Right ventricle myocardium inferior (tissue), 1 donor: ENCODE measurements at regions of chr9 and their contacts with region 1.

Region 1: DNA sequence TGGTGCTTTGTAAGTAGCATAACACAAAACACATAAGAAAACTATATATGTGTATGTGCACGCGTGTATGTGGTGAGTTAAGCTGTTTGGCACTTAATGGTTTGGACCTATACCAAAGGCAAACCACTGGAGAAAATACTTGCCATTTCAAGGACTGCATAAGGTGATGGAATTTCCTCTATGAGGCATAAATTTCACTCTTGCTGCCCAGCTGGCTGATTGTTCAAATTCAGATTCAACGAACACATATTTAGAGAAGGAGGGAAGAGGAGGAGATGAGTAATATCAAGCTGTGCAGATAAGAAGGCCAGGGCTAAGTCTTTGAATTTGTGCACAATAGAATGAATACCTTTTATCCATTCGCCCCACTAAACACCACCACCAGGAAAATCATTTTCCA is 470.6 kb upstream of the MPDZ start:
- DNase-seq: no peak
- ATAC-seq: no peak

Region 2: DNA sequence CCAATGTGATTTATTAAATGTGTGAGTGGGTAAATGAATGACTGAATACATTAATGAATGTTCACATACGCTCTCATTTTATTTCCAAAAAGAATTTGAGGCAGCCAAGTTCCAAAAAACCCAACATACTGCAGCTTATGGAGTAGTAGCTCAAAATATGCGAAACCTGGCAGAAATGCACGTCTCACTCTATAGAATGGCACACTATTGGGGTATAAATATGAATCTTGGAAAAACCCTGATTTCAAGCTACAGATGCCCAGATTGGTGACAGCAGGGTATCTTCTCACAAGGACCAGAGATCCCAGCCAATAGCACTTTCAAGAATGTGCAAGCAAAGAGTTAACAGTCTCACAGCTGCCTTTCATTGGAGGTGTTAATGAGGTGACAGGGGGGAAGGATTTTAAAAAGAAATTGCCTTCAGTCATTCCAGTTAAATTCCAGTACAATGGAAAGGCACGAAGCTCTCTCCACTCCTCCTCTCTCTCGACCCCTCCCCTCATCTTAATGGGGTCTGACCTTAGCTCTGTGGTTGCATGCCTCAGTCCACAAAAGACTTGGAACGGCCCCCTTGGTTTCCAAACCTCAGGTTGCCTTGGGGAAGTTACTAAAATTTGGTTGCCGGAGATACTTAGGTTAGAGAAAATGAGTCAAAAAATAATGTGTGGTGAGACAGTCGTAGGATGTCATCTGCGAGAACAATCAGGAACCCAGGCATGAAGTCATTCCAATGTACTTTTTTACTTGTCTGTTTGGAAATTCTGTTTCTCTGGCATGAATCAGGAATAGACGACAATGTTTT is 256.5 kb after region 1 on chr9:
- intact Hi-C with region 1: loop called (anchors 10 kb)
- DNase-seq: no peak
- ATAC-seq: no peak

Region 3: DNA sequence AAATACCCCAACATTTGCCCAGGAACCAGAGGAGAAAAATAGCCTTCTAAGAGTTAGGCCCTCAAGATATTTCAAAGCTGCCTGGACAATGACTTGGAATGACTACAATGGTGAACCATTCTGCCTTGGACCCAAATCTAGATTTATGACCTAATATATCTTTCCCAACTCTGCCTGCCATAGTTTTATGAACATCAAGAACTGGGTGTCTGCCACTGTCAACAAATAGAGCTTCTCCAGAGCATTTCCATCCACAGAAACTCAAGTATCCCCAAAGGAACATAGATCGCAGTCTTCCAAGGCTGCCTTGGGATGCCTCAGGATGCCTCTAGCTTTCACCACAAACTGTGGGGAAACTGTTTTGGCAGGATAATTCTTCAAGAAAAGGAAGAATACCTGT is 612.1 kb after region 1 on chr9:
- intact Hi-C with region 1: no loop called
- DNase-seq: no peak
- ATAC-seq: peak; percentile 89